ENCODE measurements at regions of chrX and their contacts with region 1.

Region 1: GRCh38 chrX:118847676-118848075 is 24.1 kb downstream of the ZCCHC12 start:
- DNase-seq: peak; percentile 24
- H3K4me3 Mint-ChIP-seq: no peak overlapping the region
- H3K27ac Mint-ChIP-seq: no peak overlapping the region
- H3K4me1 Mint-ChIP-seq: no peaks in the 10 kb centered on the region
- H3K27me3 Mint-ChIP-seq: peaks cover 19% of the 10 kb centered on the region
- CTCF ChIP-seq: peak; percentile 38

Region 2: DNA sequence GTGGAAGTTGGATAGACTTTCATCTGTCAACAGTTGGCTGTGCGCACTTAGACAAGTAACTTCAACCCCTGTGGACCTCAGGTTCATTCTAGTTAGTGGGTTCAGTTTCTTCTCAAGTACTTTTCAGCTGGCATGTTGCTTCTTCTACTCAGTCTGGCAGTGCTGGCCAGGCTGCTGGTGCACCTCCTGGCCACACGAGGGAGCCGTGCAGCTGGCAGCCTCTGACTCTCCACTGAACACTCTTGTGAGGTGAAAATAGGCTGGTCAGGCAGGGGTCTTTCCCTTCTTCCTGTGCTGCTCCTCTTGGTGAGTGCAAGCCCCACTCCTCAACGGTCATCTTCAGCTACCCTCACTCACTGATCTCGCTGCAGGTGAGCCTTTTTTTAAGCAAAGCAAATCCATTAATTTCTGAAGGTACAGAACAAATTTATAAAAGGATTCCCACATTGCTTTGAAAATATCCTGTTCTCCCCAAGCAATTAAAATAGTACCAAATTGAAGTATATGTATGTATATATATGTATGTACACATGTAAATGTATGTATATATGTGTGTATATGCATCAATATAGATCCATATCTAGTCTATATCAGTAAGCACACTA is 157.3 kb after region 1 on chrX:
- CTCF ChIA-PET with region 1: interaction called, 4 read pairs
- intact Hi-C with region 1: loop called (anchors 1 kb)
- DNase-seq: peak; percentile 62
- H3K4me3 Mint-ChIP-seq: no peak overlapping the region
- H3K27ac Mint-ChIP-seq: no peak overlapping the region
- H3K4me1 Mint-ChIP-seq: no peaks in the 10 kb centered on the region
- H3K27me3 Mint-ChIP-seq: no peaks in the 10 kb centered on the region
- CTCF ChIP-seq: peak; percentile 55